Dorsolateral prefrontal cortex (tissue), 120 donors: ENCODE measurements at regions of chr6 and their contacts with region 1.

Region 1: DNA sequence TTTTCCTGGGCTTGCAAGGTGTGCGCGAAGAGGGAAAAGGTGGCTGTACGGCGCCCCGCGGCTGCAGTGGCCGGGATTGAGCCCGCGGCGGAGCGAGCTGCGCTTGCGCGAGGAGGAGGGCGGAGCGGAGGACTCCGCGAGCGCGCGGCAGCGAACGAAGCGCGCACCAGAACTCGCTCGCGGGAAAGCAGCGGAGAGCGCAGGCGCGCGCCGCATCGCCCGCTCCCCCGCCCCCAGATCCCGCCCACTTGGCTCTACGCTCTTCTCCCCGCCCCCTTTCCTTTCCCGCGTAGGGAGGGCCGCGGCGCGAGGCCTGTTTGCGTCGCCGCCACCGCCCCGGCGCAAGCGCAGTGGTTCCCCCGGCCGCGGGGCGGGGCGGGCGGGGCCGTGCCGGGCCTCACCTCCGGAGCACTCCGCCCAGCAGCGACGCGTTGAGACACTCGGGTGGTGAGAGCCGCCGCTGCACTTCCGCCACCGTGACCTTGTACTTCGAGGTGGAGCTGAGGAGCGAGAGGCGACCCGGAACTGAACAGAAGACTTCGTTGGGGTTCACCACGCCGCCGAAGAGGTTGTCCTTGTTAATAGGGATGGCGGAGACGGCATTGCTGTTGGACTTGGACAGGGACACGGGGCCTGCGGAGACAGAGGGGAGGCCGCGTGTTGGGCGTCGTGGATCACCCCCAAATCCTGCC is 10.6 kb downstream of the TFAP2A start:
- DNase-seq: peak; percentile 68 to 89 (median 77)
- H3K4me3 ChIP-seq: peak overlapping the region; percentile 33 to 79 (median 62)
- H3K27ac ChIP-seq: peak overlapping the region in 36 of 59 donors; percentile 3 to 78 (median 48)
- H3K27me3 ChIP-seq: peaks cover 1 to 100% (median 92%) of the 10 kb centered on the region in 45 donors
- CTCF ChIP-seq: peak in 55 of 56 donors; percentile 29 to 77 (median 57)

Region 2: GRCh38 chr6:9851541-9852380 is 552.5 kb before region 1 on chr6:
- intact Hi-C with region 1: no loop called
- DNase-seq: no peak
- H3K4me3 ChIP-seq: no peak overlapping the region
- H3K27ac ChIP-seq: no peak overlapping the region
- H3K27me3 ChIP-seq: peaks cover 0 to 5% (median 0%) of the 10 kb centered on the region in 45 donors
- CTCF ChIP-seq: no peak

Region 3: GRCh38 chr6:10146723-10147451 is 257.4 kb before region 1 on chr6:
- intact Hi-C with region 1: loop called in 1 of 2 experiments (anchors 10 kb)
- DNase-seq: peak in 6 of 10 donors; percentile 4 to 73 (median 41)
- H3K4me3 ChIP-seq: peak overlapping the region in 57 of 59 donors; percentile 16 to 73 (median 52)
- H3K27ac ChIP-seq: peak overlapping the region in 57 of 59 donors; percentile 8 to 95 (median 80)
- H3K27me3 ChIP-seq: peaks cover 0 to 5% (median 0%) of the 10 kb centered on the region in 45 donors
- CTCF ChIP-seq: peak in 6 of 56 donors; percentile 8 to 28 (median 14)

Region 4: GRCh38 chr6:10316327-10316726 is 87.9 kb before region 1 on chr6:
- intact Hi-C with region 1: loop called in 1 of 2 experiments (anchors 2 kb)
- DNase-seq: peak; percentile 16 to 85 (median 75)
- H3K4me3 ChIP-seq: peak overlapping the region in 48 of 59 donors; percentile 4 to 57 (median 36)
- H3K27ac ChIP-seq: peak overlapping the region in 58 of 59 donors; percentile 49 to 96 (median 87)
- H3K27me3 ChIP-seq: peaks cover 0 to 5% (median 0%) of the 10 kb centered on the region in 45 donors
- CTCF ChIP-seq: peak in 6 of 56 donors; percentile 5 to 21 (median 15)